MCF 10A (cell line): ENCODE measurements at regions of chr18 and their contacts with region 1.

Region 1: DNA sequence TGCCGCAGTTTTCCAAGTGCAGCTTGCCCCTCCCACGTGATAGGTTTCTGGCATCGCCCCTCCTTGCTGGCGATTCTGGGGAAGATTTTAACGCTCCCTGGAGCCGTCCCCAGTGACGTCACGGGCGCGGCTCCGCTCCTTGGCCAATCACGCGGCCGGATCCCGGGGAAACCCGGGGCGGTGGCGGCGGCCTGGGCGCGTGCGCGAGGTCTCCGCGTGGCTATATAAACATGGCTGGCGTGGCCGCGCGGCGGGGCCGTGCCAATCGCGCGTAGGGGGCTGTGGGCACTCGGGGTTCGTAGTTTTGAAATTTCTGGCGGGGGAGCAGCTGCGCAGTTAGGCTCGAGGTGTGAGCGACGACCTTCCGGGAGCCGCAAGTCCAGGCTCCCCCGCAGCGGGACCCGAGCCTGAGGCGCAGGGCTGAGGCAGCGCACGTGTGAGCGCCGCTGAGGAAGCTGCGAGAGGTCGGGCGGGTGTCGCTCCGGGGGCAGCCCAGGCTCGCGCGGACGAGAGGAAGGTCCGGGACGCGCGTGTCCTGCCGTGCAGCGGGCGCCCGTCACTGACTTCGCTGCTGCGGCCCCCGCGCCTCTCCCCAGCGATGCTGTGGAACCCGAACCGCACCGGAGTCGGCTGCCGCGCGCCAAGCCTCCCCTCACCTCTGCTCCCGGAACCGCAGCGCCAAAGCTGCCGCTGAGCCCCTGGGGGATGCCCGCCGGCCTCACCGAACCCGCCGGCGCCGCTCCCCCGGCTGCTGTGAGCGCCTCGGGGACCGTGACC is at the start of gene TAF4B:
- DNase-seq: peak; percentile 94
- H3K4me3 Mint-ChIP-seq: peak within 1 kb of the TSS; percentile 93
- H3K27ac Mint-ChIP-seq: peak within 1 kb of the TSS; percentile 99
- H3K4me1 Mint-ChIP-seq: peaks cover 17% of the 10 kb centered on the region
- H3K27me3 Mint-ChIP-seq: peaks cover 11% of the 10 kb centered on the region
- CTCF ChIP-seq: no peak
- total RNA-seq, gene TAF4B: 5.8 and 9.2 TPM in 2 replicates

Region 2: GRCh38 chr18:26090130-26091046 is 136.0 kb before region 1 on chr18 and contains the start of gene SS18:
- CTCF ChIA-PET with region 1: no interaction called
- POLR2A ChIA-PET with region 1: interaction called, 28 read pairs
- intact Hi-C with region 1: loop called (anchors 2 kb)
- DNase-seq: peak; percentile 95
- H3K4me3 Mint-ChIP-seq: peak within 1 kb of the TSS; percentile 89
- H3K27ac Mint-ChIP-seq: peak within 1 kb of the TSS; percentile 86
- H3K4me1 Mint-ChIP-seq: peaks cover 18% of the 10 kb centered on the region
- H3K27me3 Mint-ChIP-seq: no peaks in the 10 kb centered on the region
- CTCF ChIP-seq: no peak
- total RNA-seq, gene SS18: 89.9 and 103 TPM in 2 replicates

Region 3: GRCh38 chr18:26207937-26208336 is 18.5 kb before region 1 on chr18:
- CTCF ChIA-PET with region 1: no interaction called
- POLR2A ChIA-PET with region 1: interaction called, 17 read pairs
- intact Hi-C with region 1: no loop called
- DNase-seq: no peak
- H3K4me3 Mint-ChIP-seq: no peak overlapping the region
- H3K27ac Mint-ChIP-seq: no peak overlapping the region
- H3K4me1 Mint-ChIP-seq: peaks cover 6% of the 10 kb centered on the region
- H3K27me3 Mint-ChIP-seq: no peaks in the 10 kb centered on the region
- CTCF ChIP-seq: no peak

Region 4: GRCh38 chr18:26268454-26268853 is 42.0 kb after region 1 on chr18:
- CTCF ChIA-PET with region 1: no interaction called
- POLR2A ChIA-PET with region 1: interaction called, 4 read pairs
- intact Hi-C with region 1: loop called (anchors 5 kb)
- DNase-seq: peak; percentile 84
- H3K4me3 Mint-ChIP-seq: no peak overlapping the region
- H3K27ac Mint-ChIP-seq: peak overlapping the region; percentile 76
- H3K4me1 Mint-ChIP-seq: peaks cover 8% of the 10 kb centered on the region
- H3K27me3 Mint-ChIP-seq: no peaks in the 10 kb centered on the region
- CTCF ChIP-seq: no peak